ENCODE measurements at regions of chr12 and their contacts with region 1.

Region 1: GRCh38 chr12:116443821-116444589 is 115.2 kb upstream of the MAP1LC3B2 start:
- DNase-seq: no peak

Region 2: GRCh38 chr12:116194935-116195431 is 249.0 kb before region 1 on chr12:
- intact Hi-C with region 1: no loop called
- DNase-seq: no peak

Region 3: DNA sequence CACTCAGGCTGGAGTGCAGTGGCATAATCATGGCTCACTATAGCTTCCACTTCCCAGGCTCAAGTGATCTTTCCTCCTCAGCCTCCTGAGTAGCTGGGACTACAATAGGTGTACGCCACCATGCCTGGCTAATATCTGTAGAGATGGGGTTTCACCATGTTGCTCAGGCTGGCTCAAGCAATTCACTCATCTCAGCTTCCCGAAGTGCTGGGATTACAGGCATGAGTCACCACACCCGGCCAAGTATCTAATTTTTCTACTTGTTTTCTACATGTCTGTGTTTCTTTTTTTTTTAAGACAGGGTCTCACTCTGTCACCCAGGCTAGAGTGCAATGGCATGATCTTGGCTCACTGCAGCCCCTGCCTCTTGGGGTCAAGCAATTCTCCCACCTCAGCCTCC is 46.9 kb before region 1 on chr12:
- intact Hi-C with region 1: loop called in 1 of 2 experiments (anchors 1 kb)
- DNase-seq: peak; percentile 12

Measured in posterior vena cava (tissue), 2 donors.